ENCODE measurements at regions of chr6 and their contacts with region 1.

Region 1: DNA sequence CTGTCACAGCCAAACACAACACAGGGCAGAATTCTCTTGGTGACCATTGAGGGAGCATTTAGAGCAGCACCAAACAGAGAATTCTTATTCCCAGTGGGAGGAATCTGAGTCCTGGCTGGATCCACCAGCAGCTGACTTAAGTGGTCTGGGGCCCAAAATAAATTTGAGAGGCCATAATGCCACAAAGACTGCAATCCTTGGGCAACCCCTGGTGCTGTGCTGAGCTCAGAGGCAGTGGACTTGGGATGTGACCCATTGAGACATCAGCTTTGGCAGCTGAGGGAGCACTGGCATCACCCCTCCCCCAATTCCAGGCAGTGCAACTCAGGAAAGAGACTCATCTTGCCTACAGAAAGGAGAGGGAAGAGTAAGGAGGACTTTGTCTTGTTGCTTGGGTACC is 48.6 kb upstream of the THBS2 start:
- DNase-seq: no peak

Region 2: DNA sequence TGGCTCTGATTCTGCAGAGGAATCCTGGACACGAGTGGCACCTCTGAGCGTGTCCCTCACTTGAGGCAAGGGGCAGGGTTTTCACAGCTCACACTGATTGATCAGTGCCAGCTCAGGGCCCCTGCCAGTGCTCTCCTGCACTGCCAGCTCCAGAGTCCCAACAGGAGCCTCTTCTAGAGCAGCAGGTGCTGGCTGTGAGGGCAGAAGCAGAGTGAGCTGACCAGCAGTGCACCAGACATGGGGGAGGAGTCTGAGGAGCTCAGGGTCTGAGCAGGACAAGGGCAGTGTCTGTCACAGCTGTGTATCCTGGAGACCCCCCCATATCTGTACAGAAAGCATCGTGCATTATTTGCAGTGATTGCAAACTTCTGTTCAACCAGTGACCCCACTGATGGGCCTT is 17.1 kb before region 1 on chr6:
- intact Hi-C with region 1: loop called (anchors 2 kb)
- DNase-seq: no peak

Region 3: DNA sequence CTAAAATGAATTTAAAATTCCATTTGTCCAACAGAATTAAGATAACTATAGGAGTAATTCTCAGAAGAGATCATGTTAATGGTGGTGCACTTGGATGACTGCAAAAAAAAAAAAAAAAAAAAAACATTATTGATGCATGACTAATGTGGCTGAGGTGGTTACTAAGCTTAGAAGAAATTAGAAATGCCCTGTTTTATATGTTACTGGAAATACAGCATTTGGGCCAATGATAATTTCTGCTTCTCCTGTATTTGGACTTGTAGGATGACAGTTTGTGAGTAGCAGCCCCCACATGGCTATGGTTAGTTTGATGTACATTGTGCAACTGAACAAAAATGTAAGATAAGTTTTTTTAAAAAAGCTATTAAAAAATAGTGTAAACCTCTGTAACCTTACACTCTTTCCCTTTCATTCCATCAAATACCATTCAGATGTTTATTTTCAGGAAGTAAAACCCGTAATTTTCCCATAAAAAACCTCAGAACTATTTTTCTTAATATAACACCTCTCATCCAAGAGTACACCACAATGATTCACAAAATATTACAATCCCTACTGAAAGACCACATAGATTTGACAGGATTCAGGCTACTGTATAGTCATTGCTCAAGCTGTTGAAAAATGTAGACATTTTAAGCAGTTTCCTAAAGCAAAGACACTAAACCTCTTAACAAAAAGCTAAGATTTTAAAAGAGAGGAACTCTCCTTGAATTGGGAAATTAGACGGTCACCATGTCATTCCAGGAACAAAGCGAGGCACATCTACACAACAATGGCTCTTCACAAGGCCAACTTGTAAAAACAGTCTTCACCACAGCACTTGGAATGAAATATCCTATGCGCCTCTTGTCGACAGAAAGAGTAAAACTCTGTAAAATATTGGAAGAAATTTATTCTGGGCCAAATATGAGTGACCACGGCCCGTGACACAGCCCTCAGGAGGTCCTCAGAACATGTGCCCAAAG is 316.6 kb after region 1 on chr6:
- intact Hi-C with region 1: no loop called
- DNase-seq: no peak